ENCODE measurements at regions of chr5 and their contacts with region 1.

Region 1: GRCh38 chr5:140244525-140245025 is 58.3 kb downstream of the PFDN1 start:
- DNase-seq: peak; percentile 89
- H3K4me3 ChIP-seq: peak overlapping the region; percentile 46
- H3K27ac ChIP-seq: peak overlapping the region; percentile 70
- H3K4me1 ChIP-seq: peaks cover 45% of the 10 kb centered on the region
- CTCF ChIP-seq: peak; percentile 87

Region 2: DNA sequence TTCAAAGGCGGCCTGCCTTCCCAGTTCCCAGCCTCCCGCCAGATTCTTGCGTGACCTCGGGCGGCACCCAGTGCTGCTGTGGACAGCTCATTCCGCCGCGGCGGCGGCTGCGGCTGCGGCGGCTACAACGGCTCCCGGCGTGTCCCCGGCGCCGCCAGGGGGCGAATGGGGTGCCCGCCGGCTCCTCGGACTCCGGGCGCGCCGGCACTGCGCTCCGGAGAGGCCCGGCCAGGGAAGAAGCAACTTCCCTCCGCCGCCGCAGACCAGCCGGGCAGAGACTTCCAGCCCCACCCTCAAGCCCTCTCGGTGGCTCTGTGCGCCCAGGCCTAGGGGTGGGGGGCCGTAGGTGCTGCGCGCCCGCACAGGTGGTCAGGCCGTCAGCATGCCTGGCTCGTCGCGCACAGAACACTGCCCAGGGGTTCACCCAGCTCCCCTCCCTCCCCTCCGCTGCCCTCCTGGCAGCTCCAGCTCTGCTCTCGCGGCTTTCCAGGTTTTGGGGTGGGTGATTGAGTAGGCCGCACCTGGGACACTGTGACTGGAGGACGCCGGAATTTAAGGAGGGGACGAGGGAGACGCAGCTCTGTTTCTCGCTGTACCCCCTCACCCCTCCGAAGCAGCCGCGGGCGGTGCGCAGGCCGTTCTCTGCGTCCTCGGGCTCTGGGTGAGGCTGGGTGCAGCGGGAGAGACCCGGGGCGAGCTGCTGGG is 98.6 kb before region 1 on chr5:
- CTCF ChIA-PET with region 1: no interaction called
- POLR2A ChIA-PET with region 1: no interaction called
- intact Hi-C with region 1: no loop called
- DNase-seq: no peak
- H3K4me3 ChIP-seq: no peak overlapping the region
- H3K27ac ChIP-seq: no peak overlapping the region
- H3K4me1 ChIP-seq: no peaks in the 10 kb centered on the region
- CTCF ChIP-seq: no peak

Region 3: DNA sequence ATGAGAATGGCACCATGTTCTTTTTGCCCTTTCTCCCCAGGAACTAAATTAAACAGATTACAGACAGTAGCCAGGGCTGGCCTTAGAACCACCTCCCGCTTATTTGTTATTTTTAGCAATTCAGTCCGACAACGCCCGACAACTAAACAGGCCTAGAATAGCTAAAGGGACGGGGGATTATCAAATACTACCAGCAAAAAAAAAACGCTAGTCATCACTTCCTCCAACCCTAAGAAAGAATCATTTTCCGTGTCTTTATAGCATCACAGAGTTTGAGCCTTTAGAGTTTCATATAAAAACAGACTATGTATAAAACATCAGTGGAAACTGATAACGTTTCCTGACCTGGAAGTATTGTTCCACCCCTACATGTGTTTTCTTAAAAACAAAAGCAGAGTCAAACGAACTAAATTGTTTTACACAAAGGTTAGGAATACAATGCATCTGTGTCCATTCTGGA is 23.0 kb after region 1 on chr5:
- CTCF ChIA-PET with region 1: interaction called, 14 read pairs
- POLR2A ChIA-PET with region 1: interaction called, 38 read pairs
- intact Hi-C with region 1: loop called (anchors 1 kb)
- DNase-seq: peak; percentile 54
- H3K4me3 ChIP-seq: peak overlapping the region; percentile 56
- H3K27ac ChIP-seq: peak overlapping the region; percentile 100
- H3K4me1 ChIP-seq: peaks cover 48% of the 10 kb centered on the region
- CTCF ChIP-seq: no peak

Region 4: DNA sequence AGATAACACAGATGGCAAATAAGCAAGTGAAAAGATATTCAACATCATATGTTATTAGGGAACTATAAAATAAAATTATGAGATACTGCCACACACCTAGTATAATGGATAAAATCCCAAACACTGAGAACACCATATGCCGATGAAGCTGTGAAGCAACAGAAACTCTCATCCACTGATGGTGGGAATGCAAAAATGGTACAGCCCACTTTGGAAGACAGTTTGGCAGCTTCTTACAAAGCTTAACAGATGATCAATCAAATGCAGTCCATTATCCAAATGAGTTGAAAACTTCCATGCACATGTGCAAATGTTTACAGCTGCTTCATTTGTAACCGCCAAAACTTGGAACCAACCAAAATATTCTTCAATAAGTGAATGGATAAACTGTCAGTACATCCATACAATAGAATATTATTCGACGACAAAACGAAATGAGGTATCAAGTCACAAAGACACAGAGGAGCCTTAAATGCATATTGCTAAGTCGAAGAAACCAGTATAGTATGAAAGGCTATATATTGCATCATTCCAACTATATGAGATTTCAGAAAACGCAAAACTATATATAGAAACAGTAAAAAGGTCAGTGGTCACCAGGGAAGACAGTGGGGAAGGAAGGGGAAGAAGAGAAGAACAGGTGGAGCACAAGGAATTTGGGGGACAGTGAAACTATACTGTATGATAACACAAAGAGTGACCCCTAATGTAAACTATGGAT is 43.4 kb after region 1 on chr5:
- CTCF ChIA-PET with region 1: interaction called, 13 read pairs
- POLR2A ChIA-PET with region 1: interaction called, 5 read pairs
- intact Hi-C with region 1: loop called (anchors 2 kb)
- DNase-seq: no peak
- H3K4me3 ChIP-seq: no peak overlapping the region
- H3K27ac ChIP-seq: no peak overlapping the region
- H3K4me1 ChIP-seq: peaks cover 55% of the 10 kb centered on the region
- CTCF ChIP-seq: no peak

Region 5: GRCh38 chr5:140351609-140352334 is 107.2 kb after region 1 on chr5:
- CTCF ChIA-PET with region 1: interaction called, 99 read pairs
- POLR2A ChIA-PET with region 1: interaction called, 58 read pairs
- intact Hi-C with region 1: loop called (anchors 1 kb)
- DNase-seq: peak; percentile 84
- H3K4me3 ChIP-seq: no peak overlapping the region
- H3K27ac ChIP-seq: no peak overlapping the region
- H3K4me1 ChIP-seq: peaks cover 31% of the 10 kb centered on the region
- CTCF ChIP-seq: peak; percentile 99

Region 6: GRCh38 chr5:140357726-140358093 is 113.1 kb after region 1 on chr5:
- CTCF ChIA-PET with region 1: interaction called, 40 read pairs
- POLR2A ChIA-PET with region 1: interaction called, 47 read pairs
- intact Hi-C with region 1: loop called (anchors 1 kb)
- DNase-seq: peak; percentile 80
- H3K4me3 ChIP-seq: no peak overlapping the region
- H3K27ac ChIP-seq: no peak overlapping the region
- H3K4me1 ChIP-seq: peaks cover 6% of the 10 kb centered on the region
- CTCF ChIP-seq: peak; percentile 93

Region 7: GRCh38 chr5:140557136-140557805 is 312.7 kb after region 1 on chr5 and contains the start of gene SRA1:
- CTCF ChIA-PET with region 1: no interaction called
- POLR2A ChIA-PET with region 1: no interaction called
- intact Hi-C with region 1: loop called (anchors 10 kb)
- DNase-seq: peak; percentile 89
- H3K4me3 ChIP-seq: peak within 1 kb of the TSS; percentile 82
- H3K27ac ChIP-seq: peak within 1 kb of the TSS; percentile 46
- H3K4me1 ChIP-seq: peaks cover 23% of the 10 kb centered on the region
- CTCF ChIP-seq: no peak
- total RNA-seq, gene SRA1: 18.8 and 19.1 TPM in 2 replicates

Region 8: GRCh38 chr5:140639148-140639979 is 394.8 kb after region 1 on chr5 and contains the start of gene TMCO6:
- CTCF ChIA-PET with region 1: no interaction called
- POLR2A ChIA-PET with region 1: no interaction called
- intact Hi-C with region 1: loop called (anchors 10 kb)
- DNase-seq: peak; percentile 91
- H3K4me3 ChIP-seq: peak within 1 kb of the TSS; percentile 76
- H3K27ac ChIP-seq: peak within 1 kb of the TSS; percentile 25
- H3K4me1 ChIP-seq: peaks cover 11% of the 10 kb centered on the region
- CTCF ChIP-seq: peak; percentile 70
- total RNA-seq, gene TMCO6: 15.4 and 26.9 TPM in 2 replicates